WTC11 (cell line): ENCODE measurements at regions of chr10 and their contacts with region 1.

Region 1: DNA sequence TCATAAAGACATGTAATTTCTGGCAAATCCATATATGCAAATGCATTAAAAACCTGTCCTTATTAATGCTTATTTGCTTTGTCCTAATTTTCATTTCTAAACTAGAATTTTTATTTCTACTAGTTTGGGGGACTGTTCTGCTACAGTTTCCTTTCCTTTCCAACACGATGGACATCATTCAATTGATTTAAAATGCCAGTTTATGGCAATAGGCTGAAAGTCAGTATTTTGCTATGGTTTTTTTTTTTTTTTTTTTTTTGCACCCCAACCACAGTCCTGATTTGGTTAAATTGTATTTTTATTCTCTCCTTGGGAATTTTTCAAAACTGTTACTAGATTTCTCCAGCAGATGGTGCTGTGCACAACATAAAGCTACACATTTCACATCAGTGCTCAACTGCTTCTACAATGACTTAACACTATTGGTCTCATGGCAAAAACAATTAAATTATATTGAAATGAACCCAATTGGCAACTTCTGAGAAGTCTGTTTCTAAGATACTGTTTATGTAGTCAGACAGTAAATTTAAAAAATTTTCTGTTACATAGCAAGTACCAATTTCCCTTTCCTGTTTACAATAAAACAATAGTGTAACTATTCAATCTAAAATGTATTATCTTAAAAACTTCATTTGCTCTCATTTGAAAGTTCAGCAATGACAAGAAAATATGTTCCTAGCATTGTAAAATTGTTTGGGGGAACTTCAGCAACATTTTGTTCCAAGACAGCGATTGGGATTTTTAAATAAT is 193.8 kb upstream of the CCDC6 start:
- DNase-seq: no peak
- ATAC-seq: peak; percentile 57; the same call in 1 of the 2 replicates
- H3K4me3 Mint-ChIP-seq: no peak overlapping the region
- H3K27ac Mint-ChIP-seq: no peak overlapping the region
- H3K4me1 Mint-ChIP-seq: peaks cover 11% of the 10 kb centered on the region
- H3K27me3 Mint-ChIP-seq: no peaks in the 10 kb centered on the region
- CTCF ChIP-seq: no peak

Region 2: DNA sequence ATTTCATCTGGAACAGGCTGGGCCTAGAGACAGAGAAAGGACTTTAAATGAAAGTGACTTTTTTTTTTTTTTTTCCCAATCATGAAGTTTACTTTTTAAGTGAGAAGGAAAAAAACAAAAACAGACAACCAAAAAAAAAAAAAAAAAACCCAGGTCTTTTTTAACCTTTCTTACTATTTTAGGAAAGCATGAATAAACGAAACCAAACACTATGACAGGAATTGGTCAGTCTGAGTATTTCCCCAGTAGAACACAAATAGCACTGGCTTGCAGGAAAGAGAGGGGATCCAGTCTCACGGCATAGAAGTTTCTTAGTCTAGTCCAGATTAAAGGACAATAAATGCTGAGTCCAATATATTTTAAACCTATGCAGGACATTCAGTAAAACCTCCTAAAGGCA is 13.3 kb before region 1 on chr10:
- CTCF ChIA-PET with region 1: no interaction called
- POLR2A ChIA-PET with region 1: no interaction called
- DNase-seq: no peak
- ATAC-seq: no peak
- H3K4me3 Mint-ChIP-seq: no peak overlapping the region
- H3K27ac Mint-ChIP-seq: no peak overlapping the region
- H3K4me1 Mint-ChIP-seq: peaks cover 21% of the 10 kb centered on the region
- H3K27me3 Mint-ChIP-seq: no peaks in the 10 kb centered on the region
- CTCF ChIP-seq: no peak

Region 3: DNA sequence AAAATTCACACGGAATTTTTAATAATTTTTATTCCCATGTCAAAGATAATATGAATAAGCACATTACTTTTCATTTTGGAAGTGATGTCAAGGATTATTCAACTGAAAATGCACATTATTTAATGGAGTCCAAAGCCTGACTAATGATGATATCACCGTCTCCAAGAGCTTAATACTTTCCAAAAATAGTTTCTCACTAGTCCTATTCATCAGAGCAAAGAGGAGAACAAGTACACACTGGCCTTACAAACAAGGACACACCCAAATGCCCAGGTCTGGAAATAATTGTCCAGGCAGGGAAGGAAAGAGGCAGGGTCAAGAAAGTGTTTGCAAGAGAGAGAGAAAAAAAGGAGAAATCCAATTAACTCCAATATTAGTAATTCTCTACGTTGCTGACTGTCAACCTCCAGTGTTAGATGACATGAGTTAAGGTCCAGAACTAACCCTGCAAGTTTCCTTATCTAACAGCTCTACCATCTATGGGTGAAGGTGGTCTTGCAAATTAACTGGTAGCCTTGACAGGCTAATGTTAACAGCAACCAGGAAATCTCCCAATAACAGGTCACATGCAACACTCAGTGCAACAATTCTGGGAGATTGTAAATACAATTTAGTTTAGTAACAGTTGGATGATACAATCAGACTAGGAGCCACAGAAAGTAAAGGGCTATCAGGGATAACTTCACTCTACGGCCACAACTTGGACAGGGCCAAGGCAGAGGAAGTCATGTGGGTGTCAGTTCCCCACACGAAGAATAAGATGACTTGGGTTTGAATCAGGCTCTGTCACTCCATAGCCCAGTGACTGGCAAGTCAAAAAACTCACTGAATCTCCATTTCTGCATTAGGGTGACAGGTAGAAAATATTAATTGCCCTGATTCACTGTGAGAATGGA is 23.2 kb after region 1 on chr10:
- CTCF ChIA-PET with region 1: no interaction called
- POLR2A ChIA-PET with region 1: no interaction called
- DNase-seq: no peak
- ATAC-seq: no peak
- H3K4me3 Mint-ChIP-seq: no peak overlapping the region
- H3K27ac Mint-ChIP-seq: no peak overlapping the region
- H3K4me1 Mint-ChIP-seq: no peaks in the 10 kb centered on the region
- H3K27me3 Mint-ChIP-seq: no peaks in the 10 kb centered on the region
- CTCF ChIP-seq: no peak

Region 4: DNA sequence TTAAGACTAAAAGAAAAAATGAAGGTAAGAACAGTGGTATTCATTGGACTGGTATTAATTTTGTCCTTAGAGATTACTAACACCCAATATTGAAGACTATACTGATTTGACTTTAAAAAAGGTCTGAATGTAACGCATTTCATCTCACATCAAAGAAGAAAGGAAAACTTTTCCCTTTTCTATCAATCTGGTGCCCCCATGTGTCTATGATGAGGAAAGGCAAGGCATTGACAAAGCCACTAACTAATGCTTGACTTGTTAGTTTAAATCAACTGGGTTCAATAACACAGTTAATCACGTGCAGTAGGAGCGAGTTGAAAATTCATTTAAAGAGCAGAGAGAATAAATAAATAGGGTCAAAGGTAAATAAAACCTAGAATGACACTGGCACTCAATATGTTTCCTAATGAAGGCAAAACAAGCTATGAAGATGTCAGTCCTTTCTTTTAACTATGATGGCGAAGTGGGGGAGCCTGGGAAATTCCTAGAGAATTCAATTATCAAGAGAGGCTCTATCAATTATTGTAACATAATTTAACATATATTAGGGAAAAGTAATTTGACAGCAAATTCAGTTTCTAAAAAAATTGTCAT is 108.6 kb after region 1 on chr10:
- CTCF ChIA-PET with region 1: interaction called, 39 read pairs
- POLR2A ChIA-PET with region 1: no interaction called
- DNase-seq: no peak
- ATAC-seq: peak; percentile 61; the same call in 1 of the 2 replicates
- H3K4me3 Mint-ChIP-seq: no peak overlapping the region
- H3K27ac Mint-ChIP-seq: no peak overlapping the region
- H3K4me1 Mint-ChIP-seq: peaks cover 26% of the 10 kb centered on the region
- H3K27me3 Mint-ChIP-seq: no peaks in the 10 kb centered on the region
- CTCF ChIP-seq: 0 out of 2 replicates have a peak, but pooled peaks have one; percentile 33

Region 5: GRCh38 chr10:60257767-60258428 is 157.7 kb after region 1 on chr10:
- CTCF ChIA-PET with region 1: no interaction called
- POLR2A ChIA-PET with region 1: no interaction called
- DNase-seq: no peak
- ATAC-seq: peak; percentile 47
- H3K4me3 Mint-ChIP-seq: no peak overlapping the region
- H3K27ac Mint-ChIP-seq: no peak overlapping the region
- H3K4me1 Mint-ChIP-seq: peaks cover 23% of the 10 kb centered on the region
- H3K27me3 Mint-ChIP-seq: no peaks in the 10 kb centered on the region
- CTCF ChIP-seq: no peak

Region 6: GRCh38 chr10:60399328-60399727 is 299.2 kb after region 1 on chr10:
- CTCF ChIA-PET with region 1: no interaction called
- POLR2A ChIA-PET with region 1: no interaction called
- DNase-seq: no peak
- ATAC-seq: no peak
- H3K4me3 Mint-ChIP-seq: no peak overlapping the region
- H3K27ac Mint-ChIP-seq: no peak overlapping the region
- H3K4me1 Mint-ChIP-seq: peaks cover 7% of the 10 kb centered on the region
- H3K27me3 Mint-ChIP-seq: no peaks in the 10 kb centered on the region
- CTCF ChIP-seq: no peak